MCF 10A (cell line): ENCODE measurements at regions of chr10 and their contacts with region 1.

Region 1: GRCh38 chr10:76311752-76312636 is 880.6 kb downstream of the LRMDA start:
- DNase-seq: peak; percentile 50
- H3K4me3 Mint-ChIP-seq: no peak overlapping the region
- H3K27ac Mint-ChIP-seq: no peak overlapping the region
- H3K4me1 Mint-ChIP-seq: no peaks in the 10 kb centered on the region
- H3K27me3 Mint-ChIP-seq: no peaks in the 10 kb centered on the region
- CTCF ChIP-seq: peak; percentile 52

Region 2: GRCh38 chr10:76352300-76352699 is 40.3 kb after region 1 on chr10:
- CTCF ChIA-PET with region 1: no interaction called
- POLR2A ChIA-PET with region 1: no interaction called
- intact Hi-C with region 1: no loop called
- DNase-seq: peak; percentile 94
- H3K4me3 Mint-ChIP-seq: no peak overlapping the region
- H3K27ac Mint-ChIP-seq: peak overlapping the region; percentile 93
- H3K4me1 Mint-ChIP-seq: peaks cover 31% of the 10 kb centered on the region
- H3K27me3 Mint-ChIP-seq: no peaks in the 10 kb centered on the region
- CTCF ChIP-seq: no peak

Region 3: DNA sequence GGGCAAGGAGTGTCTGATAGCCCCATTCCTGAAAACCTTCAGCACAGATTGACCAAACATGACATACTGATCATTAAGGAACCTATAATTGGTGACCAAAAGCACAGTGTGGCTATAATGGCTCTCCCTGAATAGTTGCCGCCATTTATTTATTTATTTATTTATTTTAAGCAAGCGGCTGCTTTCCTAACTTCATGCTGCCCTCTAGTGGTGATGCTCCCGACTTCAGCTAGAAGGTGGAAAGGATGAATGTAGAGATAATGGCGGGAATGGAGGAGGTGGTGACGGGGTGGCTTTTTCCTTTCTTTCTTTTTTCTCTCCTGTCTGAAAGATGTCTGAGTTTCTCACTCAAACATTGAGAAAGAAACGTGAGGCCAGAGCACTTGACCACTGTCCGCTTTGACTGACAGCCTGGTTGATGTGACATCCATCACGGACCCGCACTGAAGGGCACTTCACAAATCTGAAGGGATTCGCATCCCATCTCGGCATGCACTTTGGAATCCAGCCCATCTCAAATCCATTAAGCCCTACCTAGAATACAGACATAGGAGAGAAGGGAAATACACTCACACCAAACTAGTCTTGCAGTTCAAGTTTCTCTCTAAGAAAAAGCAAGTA is 235.5 kb after region 1 on chr10:
- CTCF ChIA-PET with region 1: interaction called, 3 read pairs
- POLR2A ChIA-PET with region 1: no interaction called
- intact Hi-C with region 1: loop called (anchors 5 kb)
- DNase-seq: peak; percentile 84
- H3K4me3 Mint-ChIP-seq: no peak overlapping the region
- H3K27ac Mint-ChIP-seq: no peak overlapping the region
- H3K4me1 Mint-ChIP-seq: no peaks in the 10 kb centered on the region
- H3K27me3 Mint-ChIP-seq: no peaks in the 10 kb centered on the region
- CTCF ChIP-seq: peak; percentile 74